SK-N-SH (cell line): ENCODE measurements at regions of chr10 and their contacts with region 1.

Region 1: DNA sequence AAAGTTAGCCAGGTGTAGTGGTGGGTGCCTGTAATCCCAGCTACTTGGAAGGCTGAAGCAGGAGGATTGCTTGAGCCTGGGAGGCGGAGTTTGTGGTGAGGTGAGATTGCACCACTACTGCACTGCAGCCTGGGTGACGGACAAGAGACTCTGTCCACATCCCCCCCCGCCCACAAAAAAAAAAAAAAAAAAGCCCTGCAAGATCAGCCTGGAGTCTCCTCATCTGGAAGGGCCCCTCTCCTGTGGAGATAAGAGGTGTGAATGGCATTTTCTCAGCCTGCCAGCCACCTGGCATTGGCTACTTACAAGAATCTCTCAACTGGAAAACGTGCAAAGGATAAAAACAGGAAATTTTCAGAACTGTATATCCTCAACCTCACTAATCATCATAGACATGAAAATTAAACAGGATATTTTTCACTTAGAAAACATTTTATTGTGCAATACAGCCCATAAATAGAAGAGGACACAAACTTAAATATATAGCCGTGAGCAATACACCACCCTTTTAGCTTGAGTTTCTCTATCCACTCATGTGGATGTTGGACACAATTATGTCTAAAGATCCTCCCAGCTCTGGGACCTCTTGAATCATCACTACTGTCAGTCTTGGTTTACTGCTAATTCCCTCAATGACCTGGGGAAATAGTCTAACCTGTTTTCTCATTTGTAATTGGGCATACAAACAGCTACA is 11.3 kb upstream of the TSPAN15 start:
- DNase-seq: no peak
- H3K4me3 ChIP-seq: no peak overlapping the region
- H3K27ac ChIP-seq: no peak overlapping the region
- H3K4me1 ChIP-seq: peaks cover 9 to 15% of the 10 kb centered on the region in 2 experiments; a peak in 3 of 4 replicates
- H3K27me3 ChIP-seq: no peaks in the 10 kb centered on the region
- CTCF ChIP-seq: no peak
- EP300 ChIP-seq: no peak
- RAD21 ChIP-seq: no peak

Region 2: GRCh38 chr10:69451209-69451783 is 11.3 kb after region 1 on chr10 and contains the start of gene TSPAN15:
- CTCF ChIA-PET with region 1: interaction called, 13 read pairs
- POLR2A ChIA-PET with region 1: no interaction called
- DNase-seq: peak; percentile 96
- H3K4me3 ChIP-seq: peak within 1 kb of the TSS; percentile 67 to 74
- H3K27ac ChIP-seq: no peak within 1 kb of the TSS; a peak in 1 of 4 replicates
- H3K4me1 ChIP-seq: peaks cover 13 to 20% of the 10 kb centered on the region in 2 experiments; a peak in 2 of 4 replicates
- H3K27me3 ChIP-seq: no peaks in the 10 kb centered on the region
- CTCF ChIP-seq: no peak
- EP300 ChIP-seq: no peak
- RAD21 ChIP-seq: no peak
- polyA plus RNA-seq, gene TSPAN15: 8.5 and 13.8 TPM in 2 replicates